ENCODE measurements at regions of chr3 and their contacts with region 1.

Region 1: DNA sequence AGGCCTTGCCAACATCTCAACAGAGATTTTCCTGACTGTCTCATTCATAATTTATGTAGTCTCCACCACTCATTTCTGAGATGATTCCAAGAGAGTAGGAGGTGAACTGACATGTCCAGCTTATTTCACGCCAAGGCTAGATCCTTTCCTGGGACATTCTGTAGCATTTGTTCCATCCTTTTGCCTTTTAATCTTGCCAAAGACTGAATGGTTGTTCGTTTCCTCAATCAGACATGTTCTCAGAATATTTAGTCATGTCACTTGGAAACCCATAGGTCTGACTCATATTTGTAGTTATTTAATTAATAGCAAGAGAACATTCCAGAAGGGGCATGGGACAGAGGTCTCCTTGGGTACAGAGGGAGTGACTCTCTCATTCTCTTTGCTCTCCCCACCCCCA is 80.9 kb downstream of the DHX36 start:
- DNase-seq: no peak

Region 2: DNA sequence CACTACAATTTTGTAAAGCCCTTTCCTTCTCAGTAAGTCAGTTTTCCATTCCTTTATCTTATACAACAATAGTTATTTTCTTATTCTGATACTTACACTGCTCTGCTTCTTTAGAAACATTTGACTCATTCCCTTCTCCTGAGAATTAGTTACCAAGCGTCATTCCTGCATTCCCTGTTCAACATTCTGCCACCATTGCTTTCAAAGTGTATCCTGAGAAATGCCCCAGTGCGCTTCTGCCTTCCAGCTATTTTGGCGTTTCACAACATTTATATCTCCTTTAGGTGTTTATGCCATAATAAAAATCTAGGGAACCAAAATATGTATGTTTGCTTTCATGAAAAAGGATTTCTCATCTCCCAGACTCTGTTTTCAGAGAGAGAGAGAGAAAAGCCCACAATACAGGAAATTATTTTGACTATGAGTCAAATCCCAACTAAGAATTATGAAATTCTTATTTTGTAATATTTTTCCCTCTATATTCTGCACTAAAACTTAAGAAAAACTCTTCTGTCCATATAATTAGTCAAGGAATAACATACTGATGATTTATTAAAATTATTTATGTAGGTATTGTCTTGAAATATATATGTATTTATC is 1199.5 kb before region 1 on chr3:
- intact Hi-C with region 1: loop called in 1 of 2 experiments (anchors 10 kb)
- DNase-seq: no peak

Region 3: GRCh38 chr3:154120961-154121700 is 122.2 kb before region 1 on chr3 and contains the start of gene ARHGEF26:
- intact Hi-C with region 1: loop called in 1 of 2 experiments (anchors 10 kb)
- DNase-seq: peak; percentile 95
- total RNA-seq, gene ARHGEF26: 14.4 to 24.9 TPM

Region 4: DNA sequence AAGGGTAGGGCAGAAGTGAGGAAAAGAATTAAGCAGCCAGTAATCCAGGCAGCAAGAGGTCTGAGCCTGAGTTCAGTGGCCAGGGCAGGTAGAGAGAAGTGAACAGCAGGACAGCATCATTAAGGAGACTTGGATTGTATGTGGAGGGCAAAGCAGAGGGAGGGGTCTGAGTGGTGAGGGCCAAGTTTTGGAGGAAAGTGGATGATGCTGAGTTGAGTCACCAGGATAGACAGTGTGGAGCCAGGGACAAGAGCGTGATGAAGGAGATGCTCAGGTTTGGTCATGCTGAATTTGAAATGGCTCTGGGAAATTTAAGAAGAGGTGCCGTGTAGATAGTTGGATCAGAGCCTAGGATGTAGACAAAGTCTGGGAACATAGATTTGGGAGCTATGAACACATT is 29.0 kb before region 1 on chr3:
- intact Hi-C with region 1: loop called in 1 of 2 experiments (anchors 1 kb)
- DNase-seq: no peak

Region 5: DNA sequence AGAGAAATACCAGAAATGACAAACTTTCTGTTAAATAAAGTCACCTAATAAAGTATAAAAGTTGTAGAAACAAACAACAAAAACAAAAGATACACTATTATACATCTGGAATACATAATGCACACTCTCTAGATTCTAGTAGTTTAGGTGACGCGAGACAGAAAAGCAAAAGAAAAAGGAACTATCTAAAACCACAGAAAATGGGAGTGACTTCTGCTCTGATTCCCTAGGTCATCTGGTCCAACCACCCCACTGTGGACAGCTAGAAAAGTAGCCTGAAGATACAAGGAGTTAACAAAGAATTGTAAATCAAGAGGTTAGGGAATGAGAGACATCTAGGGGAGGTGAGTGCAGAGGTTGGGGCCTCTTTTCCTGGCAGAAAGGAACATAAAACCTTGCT is 41.9 kb after region 1 on chr3:
- intact Hi-C with region 1: no loop called
- DNase-seq: no peak

Measured in posterior vena cava (tissue), 2 donors.